A549 (cell line): ENCODE measurements at regions of chr17 and their contacts with region 1.

Region 1: GRCh38 chr17:32444308-32445073 is at the start of gene PSMD11:
- DNase-seq: peak; percentile 98 to 99
- ATAC-seq: peak; percentile 95 to 98
- H3K4me3 ChIP-seq: peak within 1 kb of the TSS; percentile 92
- H3K27ac ChIP-seq: peak within 1 kb of the TSS; percentile 95 to 97
- H3K4me1 ChIP-seq: peaks cover 19% of the 10 kb centered on the region
- CTCF ChIP-seq: peak; percentile 97; the same call in 2 of the 3 replicates
- EP300 ChIP-seq: no peak
- POLR2A ChIP-seq: peak; percentile 85
- RAD21 ChIP-seq: peak; percentile 44 to 59; a peak in 4 of 5 replicates
- polyA plus RNA-seq, gene PSMD11: 228 and 235 TPM in 2 replicates

Region 2: GRCh38 chr17:32341857-32342602 is 102.5 kb before region 1 on chr17 and contains the start of gene C17orf75:
- CTCF ChIA-PET with region 1: interaction called, 13 read pairs
- POLR2A ChIA-PET with region 1: interaction called, 7 read pairs
- DNase-seq: peak; percentile 69 to 90
- ATAC-seq: peak; percentile 95
- H3K4me3 ChIP-seq: peak within 1 kb of the TSS; percentile 69
- H3K27ac ChIP-seq: peak within 1 kb of the TSS; percentile 83 to 96
- H3K4me1 ChIP-seq: peaks cover 10% of the 10 kb centered on the region; the same call in 1 of the 3 replicates
- CTCF ChIP-seq: no peak
- EP300 ChIP-seq: no peak; a peak in 1 of 5 replicates
- POLR2A ChIP-seq: peak; percentile 71; the same call in 1 of the 2 replicates
- RAD21 ChIP-seq: no peak
- polyA plus RNA-seq, gene C17orf75: 36.9 and 49.6 TPM in 2 replicates

Region 3: GRCh38 chr17:32398946-32399345 is 45.5 kb before region 1 on chr17:
- CTCF ChIA-PET with region 1: interaction called, 10 read pairs
- POLR2A ChIA-PET with region 1: interaction called, 3 read pairs
- DNase-seq: no peak
- ATAC-seq: no peak; a peak in 1 of 6 replicates
- H3K4me3 ChIP-seq: no peak overlapping the region
- H3K27ac ChIP-seq: no peak overlapping the region
- H3K4me1 ChIP-seq: 0 out of 3 replicates have a peak, but pooled peaks cover 4% of the 10 kb centered on the region
- CTCF ChIP-seq: no peak
- EP300 ChIP-seq: no peak
- POLR2A ChIP-seq: no peak
- RAD21 ChIP-seq: no peak

Region 4: GRCh38 chr17:32429598-32429997 is 14.9 kb before region 1 on chr17:
- CTCF ChIA-PET with region 1: interaction called, 25 read pairs
- POLR2A ChIA-PET with region 1: interaction called, 5 read pairs
- DNase-seq: no peak
- ATAC-seq: no peak
- H3K4me3 ChIP-seq: no peak overlapping the region
- H3K27ac ChIP-seq: no peak overlapping the region
- H3K4me1 ChIP-seq: no peaks in the 10 kb centered on the region
- CTCF ChIP-seq: no peak
- EP300 ChIP-seq: no peak
- POLR2A ChIP-seq: no peak
- RAD21 ChIP-seq: no peak

Region 5: GRCh38 chr17:32461853-32462617 is 17.5 kb after region 1 on chr17:
- CTCF ChIA-PET with region 1: interaction called, 138 read pairs
- POLR2A ChIA-PET with region 1: interaction called, 4 read pairs
- DNase-seq: peak; percentile 71 to 81
- ATAC-seq: peak; percentile 85 to 88
- H3K4me3 ChIP-seq: no peak overlapping the region
- H3K27ac ChIP-seq: no peak overlapping the region
- H3K4me1 ChIP-seq: 0 out of 3 replicates have a peak, but pooled peaks cover 3% of the 10 kb centered on the region
- CTCF ChIP-seq: peak; percentile 58
- EP300 ChIP-seq: no peak
- POLR2A ChIP-seq: no peak
- RAD21 ChIP-seq: no peak

Region 6: DNA sequence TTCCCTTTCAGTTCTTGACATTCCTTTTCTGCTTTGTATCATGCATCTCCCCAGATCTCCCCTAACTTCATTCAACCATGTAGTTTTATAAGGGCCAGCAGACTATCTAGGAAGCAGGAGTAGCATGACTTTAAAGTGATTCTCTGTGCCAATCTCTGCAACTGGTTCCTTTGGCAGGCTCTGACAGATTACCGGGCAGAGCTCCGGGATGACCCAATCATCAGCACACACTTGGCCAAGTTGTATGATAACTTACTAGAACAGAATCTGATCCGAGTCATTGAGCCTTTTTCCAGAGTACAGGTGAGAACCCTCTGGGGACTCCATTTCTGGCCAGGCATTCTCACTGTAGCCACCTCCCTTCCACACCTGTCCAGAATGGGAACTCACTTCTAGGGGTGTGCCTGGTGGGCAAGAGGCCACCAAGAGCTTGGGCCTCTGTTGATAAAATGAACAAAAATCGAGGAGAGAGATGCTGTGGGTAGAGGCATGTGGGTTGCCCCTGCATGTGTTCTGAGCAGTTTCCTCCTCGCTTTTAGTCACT is 34.7 kb after region 1 on chr17:
- CTCF ChIA-PET with region 1: interaction called, 11 read pairs
- POLR2A ChIA-PET with region 1: interaction called, 3 read pairs
- DNase-seq: no peak
- ATAC-seq: no peak
- H3K4me3 ChIP-seq: no peak overlapping the region
- H3K27ac ChIP-seq: no peak overlapping the region
- H3K4me1 ChIP-seq: no peaks in the 10 kb centered on the region
- CTCF ChIP-seq: no peak
- EP300 ChIP-seq: no peak
- POLR2A ChIP-seq: no peak
- RAD21 ChIP-seq: no peak

Region 7: DNA sequence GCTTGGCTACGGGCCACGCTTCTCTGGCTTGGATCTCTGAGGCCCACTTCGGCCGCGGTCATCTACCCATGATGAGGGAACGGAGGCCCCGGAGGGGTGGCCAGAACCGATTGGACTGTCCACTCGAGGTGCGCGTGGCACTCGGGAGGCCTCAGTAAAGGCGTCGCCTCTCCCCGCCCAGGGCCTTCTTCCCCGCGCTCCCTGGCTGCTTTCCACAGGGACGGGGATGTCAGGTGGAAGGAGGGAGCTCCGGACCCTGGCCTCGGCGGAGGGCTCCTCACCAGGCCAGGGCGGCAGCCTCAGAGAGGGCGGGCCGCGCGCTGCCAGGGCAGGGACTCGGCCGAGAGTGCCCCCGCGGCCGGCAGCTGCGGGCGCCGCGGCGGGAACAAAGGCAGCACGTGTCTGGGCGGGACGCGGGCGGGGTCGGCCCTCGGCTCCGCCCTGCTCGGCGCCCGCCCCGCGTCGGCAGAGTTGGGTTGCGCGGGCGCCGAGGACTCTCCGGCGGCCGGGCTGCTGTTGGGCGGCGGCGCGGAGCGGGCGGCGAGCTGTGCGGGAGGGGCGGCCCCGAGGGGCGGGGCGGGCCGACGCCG is 41.7 kb after region 1 on chr17:
- CTCF ChIA-PET with region 1: interaction called, 10 read pairs
- POLR2A ChIA-PET with region 1: interaction called, 3 read pairs
- DNase-seq: peak; percentile 76 to 77
- ATAC-seq: peak; percentile 65 to 82
- H3K4me3 ChIP-seq: peak overlapping the region; percentile 94
- H3K27ac ChIP-seq: peak overlapping the region; percentile 86 to 92
- H3K4me1 ChIP-seq: peaks cover 6% of the 10 kb centered on the region; the same call in 1 of the 3 replicates
- CTCF ChIP-seq: no peak
- EP300 ChIP-seq: no peak
- POLR2A ChIP-seq: no peak
- RAD21 ChIP-seq: no peak